Natural killer cell (primary cell): ENCODE measurements at regions of chr1 and their contacts with region 1.

Region 1: DNA sequence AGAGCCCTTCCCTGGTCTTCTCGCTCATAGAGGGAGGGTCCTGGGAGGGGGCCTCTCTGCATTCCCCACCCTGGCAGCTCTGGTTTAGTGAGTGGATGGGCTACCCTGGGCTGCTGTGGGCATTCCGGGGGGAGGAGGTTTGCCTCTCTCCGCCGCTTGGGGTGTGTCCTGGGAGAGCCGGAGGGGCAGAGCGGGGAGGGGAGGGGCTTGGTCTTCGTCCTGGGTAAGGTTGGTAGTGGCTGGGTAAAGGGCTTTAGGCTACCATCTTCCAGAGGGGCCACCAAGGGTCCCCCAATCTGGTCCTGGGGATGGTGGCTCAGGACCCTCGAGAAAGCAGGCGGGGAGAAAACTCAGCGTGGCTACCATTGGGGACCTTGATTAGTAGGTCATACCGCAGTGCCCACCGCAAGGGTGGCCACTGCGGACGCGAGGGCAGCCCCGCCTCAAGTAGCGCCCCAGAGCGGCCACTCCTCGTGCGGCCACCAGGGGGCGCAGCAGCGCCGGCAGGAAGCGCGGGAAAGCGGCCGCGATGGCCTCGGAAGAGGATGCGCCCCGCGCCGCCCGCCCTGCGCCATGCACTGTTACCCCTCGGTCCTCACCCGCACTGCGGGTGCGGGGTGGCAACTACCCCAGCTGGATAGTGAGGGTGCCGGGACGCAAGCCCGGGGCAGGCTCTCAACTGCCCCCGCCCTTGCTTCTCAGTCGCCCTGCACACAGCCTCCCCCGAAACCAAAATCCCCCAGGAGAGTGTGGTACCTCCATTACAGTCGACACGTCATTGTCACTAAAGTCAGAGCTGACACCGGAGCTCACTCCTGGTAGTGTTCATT is 44.1 kb upstream of the SLC25A33 start:
- DNase-seq: peak; percentile 65 to 85
- ATAC-seq: peak; percentile 76 to 85 (median 78)
- H3K4me3 ChIP-seq: no peak overlapping the region
- H3K4me3 Mint-ChIP-seq: peak overlapping the region; percentile 25
- H3K27ac ChIP-seq: no peak overlapping the region
- H3K27ac Mint-ChIP-seq: no peak overlapping the region
- H3K4me1 ChIP-seq: peaks cover 10% of the 10 kb centered on the region
- H3K4me1 Mint-ChIP-seq: peaks cover 0 to 7% of the 10 kb centered on the region in 2 donors
- H3K27me3 ChIP-seq: no peaks in the 10 kb centered on the region
- H3K27me3 Mint-ChIP-seq: peaks cover 0 to 15% of the 10 kb centered on the region in 2 donors
- CTCF ChIP-seq: peak; percentile 99

Region 2: GRCh38 chr1:9145021-9145668 is 350.0 kb before region 1 on chr1:
- intact Hi-C with region 1: loop called (anchors 1 kb)
- DNase-seq: no peak
- ATAC-seq: no peak
- H3K4me3 ChIP-seq: no peak overlapping the region
- H3K4me3 Mint-ChIP-seq: no peak overlapping the region
- H3K27ac ChIP-seq: no peak overlapping the region
- H3K27ac Mint-ChIP-seq: no peak overlapping the region
- H3K4me1 ChIP-seq: no peaks in the 10 kb centered on the region
- H3K4me1 Mint-ChIP-seq: peaks cover 6 to 14% of the 10 kb centered on the region in 2 donors
- H3K27me3 ChIP-seq: no peaks in the 10 kb centered on the region
- H3K27me3 Mint-ChIP-seq: peaks cover 0 to 4% of the 10 kb centered on the region in 2 donors
- CTCF ChIP-seq: no peak

Region 3: DNA sequence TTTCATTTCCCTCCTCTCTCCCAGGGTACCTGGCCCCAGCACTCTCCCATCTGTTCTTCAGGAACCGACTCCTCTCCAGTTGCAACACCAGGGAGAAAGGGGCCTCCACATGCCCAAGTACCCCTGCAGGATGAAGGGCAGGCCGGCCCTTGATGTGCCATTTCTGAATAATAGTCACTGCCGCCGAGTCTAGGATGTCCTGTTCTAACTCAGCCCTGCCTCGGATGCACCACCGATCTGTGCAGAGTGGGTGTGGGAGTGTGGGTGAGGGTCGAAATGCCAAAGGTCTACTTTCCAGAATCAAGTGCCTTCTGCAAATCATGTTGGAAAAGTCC is 227.8 kb before region 1 on chr1:
- intact Hi-C with region 1: loop called (anchors 1 kb)
- DNase-seq: no peak
- ATAC-seq: no peak
- H3K4me3 ChIP-seq: no peak overlapping the region
- H3K4me3 Mint-ChIP-seq: no peak overlapping the region
- H3K27ac ChIP-seq: no peak overlapping the region
- H3K27ac Mint-ChIP-seq: no peak overlapping the region
- H3K4me1 ChIP-seq: peaks cover 5% of the 10 kb centered on the region
- H3K4me1 Mint-ChIP-seq: peaks cover 0 to 5% of the 10 kb centered on the region in 2 donors
- H3K27me3 ChIP-seq: no peaks in the 10 kb centered on the region
- H3K27me3 Mint-ChIP-seq: no peaks in the 10 kb centered on the region
- CTCF ChIP-seq: peak; percentile 59

Region 4: GRCh38 chr1:9573723-9574122 is 78.6 kb after region 1 on chr1:
- intact Hi-C with region 1: loop called (anchors 1 kb)
- DNase-seq: peak in 1 of 2 donors; percentile 48
- ATAC-seq: no peak
- H3K4me3 ChIP-seq: no peak overlapping the region
- H3K4me3 Mint-ChIP-seq: no peak overlapping the region
- H3K27ac ChIP-seq: no peak overlapping the region
- H3K27ac Mint-ChIP-seq: no peak overlapping the region
- H3K4me1 ChIP-seq: no peaks in the 10 kb centered on the region
- H3K4me1 Mint-ChIP-seq: no peaks in the 10 kb centered on the region
- H3K27me3 ChIP-seq: no peaks in the 10 kb centered on the region
- H3K27me3 Mint-ChIP-seq: no peaks in the 10 kb centered on the region
- CTCF ChIP-seq: no peak

Region 5: GRCh38 chr1:10430216-10431069 is 935.3 kb after region 1 on chr1 and contains the start of gene CENPS:
- intact Hi-C with region 1: loop called (anchors 10 kb)
- DNase-seq: peak; percentile 90 to 95
- ATAC-seq: peak; percentile 82 to 94 (median 86)
- H3K4me3 ChIP-seq: peak within 1 kb of the TSS; percentile 84
- H3K4me3 Mint-ChIP-seq: peak within 1 kb of the TSS; percentile 92
- H3K27ac ChIP-seq: peak within 1 kb of the TSS; percentile 85
- H3K27ac Mint-ChIP-seq: peak within 1 kb of the TSS; percentile 89 to 97
- H3K4me1 ChIP-seq: peaks cover 18% of the 10 kb centered on the region
- H3K4me1 Mint-ChIP-seq: peaks cover 17% of the 10 kb centered on the region in 2 donors
- H3K27me3 ChIP-seq: no peaks in the 10 kb centered on the region
- H3K27me3 Mint-ChIP-seq: no peaks in the 10 kb centered on the region
- CTCF ChIP-seq: peak; percentile 91
- total RNA-seq, gene CENPS: 4.1 to 5.0 (median 4.5) TPM